Posterior cingulate gyrus (tissue), 11 donors: ENCODE measurements at regions of chr10 and their contacts with region 1.

Region 1: DNA sequence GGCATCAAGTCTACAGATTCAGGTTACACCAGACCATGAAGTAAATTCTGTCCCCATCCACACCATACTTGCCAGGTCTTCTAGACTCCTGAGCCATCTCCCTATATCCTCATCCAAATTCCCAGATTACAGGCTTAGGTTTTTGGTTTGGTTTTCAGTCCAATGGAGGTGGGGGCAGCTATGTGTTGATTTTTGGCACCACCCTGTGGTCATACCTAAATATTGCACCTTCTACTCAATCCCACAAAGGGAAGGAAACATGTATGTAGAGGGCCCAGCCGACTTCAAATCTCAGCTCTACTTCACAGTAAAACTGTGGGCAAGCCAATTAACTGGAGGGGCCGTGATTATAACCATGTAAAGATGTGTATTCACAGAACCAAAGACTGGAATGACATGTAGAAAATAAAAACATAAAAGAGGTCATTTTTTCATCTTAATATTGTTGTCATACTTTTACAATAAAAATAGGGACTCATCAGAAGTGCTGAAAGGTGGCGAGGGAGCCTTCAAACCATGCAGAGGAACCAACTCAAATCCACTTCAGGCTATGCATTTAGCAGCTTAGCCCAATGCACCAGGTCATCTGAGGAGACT is 19.8 kb downstream of the ERCC6 start:
- DNase-seq: peak in 1 of 10 donors; percentile 35

Region 2: DNA sequence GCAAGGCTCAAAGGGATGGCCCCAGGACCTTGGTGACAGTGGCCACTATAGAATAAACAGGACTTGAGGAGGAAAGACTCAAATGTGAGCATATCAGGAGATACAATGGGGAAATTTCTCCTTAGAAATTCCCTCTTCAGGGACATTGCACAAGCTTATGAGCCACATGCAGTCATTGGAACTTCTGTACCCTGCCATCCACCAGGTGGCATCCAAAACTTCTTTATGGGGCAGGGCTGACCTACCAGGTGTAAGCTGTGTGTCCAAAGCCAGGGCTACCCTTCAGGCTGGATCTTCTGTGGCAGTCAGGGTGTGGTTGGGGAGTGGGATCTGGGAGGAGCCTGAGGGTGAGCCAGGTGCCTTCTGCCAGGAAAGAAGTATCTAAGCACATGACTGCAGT is 542.9 kb before region 1 on chr10:
- intact Hi-C with region 1: loop called (anchors 10 kb)
- DNase-seq: peak in 1 of 10 donors; percentile 26

Region 3: DNA sequence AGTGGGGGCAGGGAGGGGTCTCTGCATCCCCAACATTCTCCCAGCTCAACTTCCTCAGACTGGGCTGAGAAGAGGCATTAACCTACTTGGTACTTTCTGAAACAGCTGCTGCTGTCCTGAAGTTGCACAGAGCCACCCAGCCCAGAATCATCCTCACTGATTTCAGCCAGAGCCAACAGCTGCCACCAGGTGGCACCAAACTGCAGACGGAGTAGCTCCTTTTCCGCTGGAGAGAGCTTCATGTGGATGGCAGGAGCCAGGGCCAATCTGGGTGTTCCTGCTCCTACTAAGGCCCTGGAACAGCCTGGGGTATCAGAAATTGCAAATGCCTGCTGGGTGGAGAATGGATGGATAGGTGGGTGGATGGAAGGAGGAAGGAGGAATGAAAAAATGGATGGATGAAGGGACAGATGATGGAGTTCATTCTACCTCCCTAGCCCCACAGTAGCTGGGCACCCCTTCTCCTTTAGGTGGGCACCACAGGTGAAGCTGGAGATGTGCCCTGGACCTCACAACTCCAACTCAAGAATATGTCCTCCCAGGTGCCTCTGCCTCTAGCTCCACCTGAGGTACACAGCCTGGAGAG is 111.4 kb before region 1 on chr10:
- intact Hi-C with region 1: loop called (anchors 2 kb)
- DNase-seq: peak; percentile 57 to 96 (median 83)